Colonic mucosa (tissue), 4 donors: ENCODE measurements at regions of chr2 and their contacts with region 1.

Region 1: GRCh38 chr2:16664052-16664731 is 1.4 kb downstream of the CYRIA start:
- DNase-seq: peak; percentile 62
- H3K4me3 ChIP-seq: peak overlapping the region; percentile 45
- H3K27ac ChIP-seq: peak overlapping the region; percentile 4
- H3K4me1 ChIP-seq: no peaks in the 10 kb centered on the region
- H3K27me3 ChIP-seq: peaks cover 5% of the 10 kb centered on the region
- CTCF ChIP-seq: no peak

Region 2: GRCh38 chr2:16623031-16623430 is 41.2 kb before region 1 on chr2:
- intact Hi-C with region 1: loop called (anchors 5 kb)
- DNase-seq: no peak
- H3K4me3 ChIP-seq: no peak overlapping the region
- H3K27ac ChIP-seq: peak overlapping the region; percentile 6
- H3K4me1 ChIP-seq: no peaks in the 10 kb centered on the region
- H3K27me3 ChIP-seq: no peaks in the 10 kb centered on the region
- CTCF ChIP-seq: no peak

Region 3: DNA sequence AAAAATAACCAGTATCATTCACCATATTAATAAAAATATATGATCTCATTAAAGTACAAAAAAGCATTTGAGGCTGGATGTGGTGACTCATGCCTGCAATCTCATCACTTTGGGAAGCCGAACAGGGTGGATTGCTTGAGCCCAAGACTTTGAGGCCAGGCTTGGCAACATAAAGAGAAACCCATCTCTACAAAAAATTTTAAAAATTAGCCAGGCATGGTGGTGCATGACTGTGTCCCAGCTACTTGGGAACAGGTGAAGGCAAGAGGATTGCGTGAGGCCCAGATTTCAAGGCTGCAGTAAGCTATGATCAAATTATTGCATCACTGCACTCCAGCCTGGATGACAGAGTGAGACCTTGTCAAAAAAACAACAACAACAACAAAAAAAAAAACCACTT is 778.1 kb after region 1 on chr2:
- intact Hi-C with region 1: no loop called
- DNase-seq: no peak
- H3K4me3 ChIP-seq: no peak overlapping the region
- H3K27ac ChIP-seq: no peak overlapping the region
- H3K4me1 ChIP-seq: no peaks in the 10 kb centered on the region
- H3K27me3 ChIP-seq: no peaks in the 10 kb centered on the region
- CTCF ChIP-seq: no peak